Sigmoid colon (tissue), 7 donors: ENCODE measurements at regions of chr22 and their contacts with region 1.

Region 1: GRCh38 chr22:39349967-39350726 is at the start of gene SYNGR1:
- DNase-seq: no peak
- H3K4me3 ChIP-seq: peak within 1 kb of the TSS; percentile 63 to 98 (median 78)
- H3K27ac ChIP-seq: peak within 1 kb of the TSS; percentile 72 to 82 (median 77)
- H3K4me1 ChIP-seq: peaks cover 0 to 22% (median 19%) of the 10 kb centered on the region in 4 donors
- H3K27me3 ChIP-seq: no peaks in the 10 kb centered on the region
- CTCF ChIP-seq: no peak
- EP300 ChIP-seq: no peak
- POLR2A ChIP-seq: no peak
- total RNA-seq, gene SYNGR1: 14.5 to 29.4 (median 20.2) TPM

Region 2: DNA sequence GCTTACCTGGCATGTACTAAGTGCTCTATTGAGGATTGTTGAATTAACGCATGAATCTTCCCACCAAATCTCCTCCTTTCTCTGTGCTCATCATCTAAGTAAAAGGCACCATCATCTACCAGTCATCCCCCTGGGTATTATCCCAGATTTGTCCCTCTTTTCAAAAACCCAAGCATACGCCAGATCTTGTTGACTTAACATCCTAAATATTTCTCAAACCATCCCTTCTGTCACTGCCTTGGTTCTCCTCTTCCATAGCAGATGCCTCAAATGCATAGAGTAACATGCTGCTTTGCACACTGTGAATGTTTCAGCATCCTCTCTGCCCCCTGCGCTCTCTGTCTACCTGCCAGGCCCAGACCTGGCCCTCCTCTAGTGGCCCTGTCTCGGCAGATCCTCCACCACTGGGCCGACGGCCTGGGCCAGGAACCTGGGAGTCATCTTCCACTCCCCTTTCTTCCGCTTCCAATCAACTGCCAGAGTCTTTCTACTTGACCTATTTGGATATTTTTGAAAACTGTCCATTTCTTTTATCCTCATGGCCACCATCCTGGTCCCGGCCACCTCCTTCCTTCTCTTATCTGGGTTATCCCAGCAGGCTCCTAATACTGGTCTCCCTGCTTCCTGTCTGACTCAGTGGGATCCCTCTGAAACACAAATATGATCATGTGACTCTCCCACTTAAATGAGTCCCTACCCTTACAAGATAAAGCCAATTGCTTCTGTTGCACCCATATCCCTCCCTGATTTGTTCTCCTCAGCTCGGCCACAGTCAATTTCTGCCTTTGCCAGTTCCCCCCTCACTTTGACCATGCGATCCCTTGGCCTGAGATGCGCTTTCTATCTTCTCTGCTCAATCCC is 46.0 kb after region 1 on chr22:
- intact Hi-C with region 1: loop called (anchors 5 kb)
- DNase-seq: no peak
- H3K4me3 ChIP-seq: no peak overlapping the region
- H3K27ac ChIP-seq: no peak overlapping the region
- H3K4me1 ChIP-seq: peaks cover 0 to 11% (median 10%) of the 10 kb centered on the region in 4 donors
- H3K27me3 ChIP-seq: no peaks in the 10 kb centered on the region
- CTCF ChIP-seq: no peak
- EP300 ChIP-seq: no peak
- POLR2A ChIP-seq: no peak